Astrocyte of the cerebellum (primary cell): ENCODE measurements at regions of chr22 and their contacts with region 1.

Region 1: GRCh38 chr22:46006379-46007002 is 29.5 kb upstream of the WNT7B start:
- DNase-seq: peak; percentile 74
- H3K4me3 ChIP-seq: peak overlapping the region; percentile 16
- CTCF ChIP-seq: peak; percentile 90

Region 2: GRCh38 chr22:45903355-45904149 is 102.9 kb before region 1 on chr22:
- in situ Hi-C with region 1: no loop called
- DNase-seq: peak; percentile 53
- H3K4me3 ChIP-seq: no peak overlapping the region
- CTCF ChIP-seq: no peak

Region 3: DNA sequence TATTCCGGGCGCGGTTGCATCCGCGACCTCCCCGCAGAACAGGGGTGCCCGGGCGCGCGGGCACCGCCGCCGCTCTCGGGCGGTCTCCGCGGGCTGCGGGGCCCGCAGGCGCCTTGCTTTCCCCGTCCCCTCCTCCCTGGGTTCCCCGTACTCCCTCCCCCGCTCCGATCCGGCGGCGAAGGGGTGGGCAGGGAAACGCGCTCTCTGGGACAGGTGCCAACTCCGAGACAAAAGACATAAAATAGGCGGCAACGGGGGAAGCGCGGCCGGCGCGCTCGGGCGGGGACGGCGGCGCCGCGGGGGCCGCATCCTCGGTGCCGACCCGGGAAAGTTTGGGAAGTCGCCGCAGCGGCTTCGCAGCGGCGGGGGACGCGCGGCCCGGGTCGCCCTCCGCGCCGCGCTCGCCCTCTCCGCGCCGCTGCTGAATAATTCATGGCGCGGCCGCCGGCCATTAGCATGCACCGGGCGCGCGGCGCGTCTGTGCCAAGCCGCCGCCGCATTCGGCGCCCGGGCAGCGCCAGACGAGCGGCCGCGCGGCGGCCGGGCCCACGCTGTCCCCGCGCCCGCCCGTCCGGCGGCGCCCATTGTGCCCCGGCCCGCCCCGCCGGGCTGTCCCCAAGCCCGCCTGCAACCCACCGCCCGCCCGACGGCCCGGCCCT is 65.1 kb after region 1 on chr22:
- in situ Hi-C with region 1: loop called (anchors 10 kb)
- DNase-seq: peak; percentile 95
- H3K4me3 ChIP-seq: peak overlapping the region; percentile 98
- CTCF ChIP-seq: no peak